PC-3 (cell line): ENCODE measurements at regions of chr13 and their contacts with region 1.

Region 1: DNA sequence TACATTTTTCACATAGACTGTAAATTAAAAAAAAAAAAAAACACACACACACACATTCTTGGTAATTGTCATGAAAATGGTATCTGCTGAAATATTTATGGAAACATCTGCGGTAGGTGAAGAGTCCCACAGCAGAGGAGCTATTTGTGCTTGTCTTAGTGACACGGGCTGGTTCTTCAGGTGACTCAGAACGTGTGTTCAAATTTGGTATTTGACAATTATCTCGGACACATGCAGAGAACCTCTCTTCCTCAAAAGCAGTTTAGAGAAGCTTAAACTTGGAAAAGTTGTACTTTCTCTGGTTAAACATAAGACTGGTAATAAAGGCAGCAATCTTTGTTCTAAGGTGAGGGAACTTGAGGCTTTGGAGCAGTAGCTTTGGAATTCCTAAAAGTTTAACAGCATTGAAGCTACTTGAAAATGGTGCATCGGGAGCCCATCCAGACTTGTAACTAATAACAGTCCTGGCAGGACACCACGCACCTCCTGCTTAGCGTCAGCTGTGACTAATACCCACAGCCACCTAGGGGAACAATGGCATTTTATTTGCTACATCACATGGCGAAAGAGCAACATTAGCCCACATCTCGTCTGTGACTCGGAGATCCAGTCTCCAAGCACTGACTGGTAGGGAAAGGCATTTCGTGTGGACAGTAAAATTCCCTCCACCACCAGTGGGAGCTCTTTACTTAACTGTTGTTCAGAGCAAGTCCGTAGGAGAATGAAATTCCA is 1505.1 kb upstream of the SLC10A2 start:
- DNase-seq: peak; percentile 90
- ATAC-seq: peak; percentile 96
- H3K4me3 ChIP-seq: peak overlapping the region; percentile 55
- H3K27ac ChIP-seq: peak overlapping the region; percentile 68
- H3K4me1 ChIP-seq: peaks cover 17% of the 10 kb centered on the region
- H3K27me3 ChIP-seq: no peaks in the 10 kb centered on the region
- CTCF ChIP-seq: peak; percentile 66

Region 2: DNA sequence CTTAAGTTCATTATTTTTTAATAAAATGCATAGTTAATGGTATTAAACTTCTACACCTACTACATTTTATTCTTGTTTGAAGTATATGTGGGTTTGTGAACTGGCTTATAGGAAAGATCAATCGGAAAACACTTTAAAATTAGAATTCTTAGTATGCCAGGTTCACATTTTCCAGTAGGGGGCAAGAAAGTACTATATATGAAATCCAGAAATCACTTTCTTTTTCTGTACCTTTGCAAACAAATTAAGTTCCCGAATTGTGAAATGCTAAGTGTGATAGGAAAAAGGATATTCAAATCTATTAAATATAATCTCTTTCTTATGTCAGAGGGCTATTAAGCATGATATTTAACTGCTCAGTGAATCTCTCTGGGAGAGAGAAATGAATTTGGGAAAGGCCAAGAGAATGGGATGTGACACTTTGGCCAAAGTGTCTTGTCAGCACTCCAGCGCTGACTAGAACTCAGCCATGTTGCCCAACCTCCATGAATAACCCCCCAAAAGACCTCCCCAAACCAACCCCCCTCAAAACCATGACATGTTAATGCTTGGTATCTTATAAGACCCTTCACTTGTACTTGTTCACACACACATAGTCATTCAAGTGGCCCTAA is 1382.5 kb before region 1 on chr13:
- CTCF ChIA-PET with region 1: no interaction called
- POLR2A ChIA-PET with region 1: no interaction called
- intact Hi-C with region 1: loop called (anchors 5 kb)
- DNase-seq: peak; percentile 48
- ATAC-seq: peak; percentile 24; the same call in 1 of the 2 replicates
- H3K4me3 ChIP-seq: no peak overlapping the region
- H3K27ac ChIP-seq: 0 out of 2 replicates have a peak overlapping the region, but pooled peaks have one; percentile 11
- H3K4me1 ChIP-seq: no peaks in the 10 kb centered on the region
- H3K27me3 ChIP-seq: no peaks in the 10 kb centered on the region
- CTCF ChIP-seq: peak; percentile 72

Region 3: GRCh38 chr13:103218253-103218652 is 1353.1 kb before region 1 on chr13:
- CTCF ChIA-PET with region 1: no interaction called
- POLR2A ChIA-PET with region 1: no interaction called
- intact Hi-C with region 1: no loop called
- DNase-seq: peak; percentile 16
- ATAC-seq: peak; percentile 73
- H3K4me3 ChIP-seq: no peak overlapping the region
- H3K27ac ChIP-seq: no peak overlapping the region
- H3K4me1 ChIP-seq: peaks cover 4% of the 10 kb centered on the region; the same call in 1 of the 2 replicates
- H3K27me3 ChIP-seq: no peaks in the 10 kb centered on the region
- CTCF ChIP-seq: no peak

Region 4: GRCh38 chr13:104289400-104289799 is 281.9 kb before region 1 on chr13:
- CTCF ChIA-PET with region 1: no interaction called
- POLR2A ChIA-PET with region 1: no interaction called
- intact Hi-C with region 1: loop called (anchors 1 kb)
- DNase-seq: peak; percentile 50
- ATAC-seq: peak; percentile 81
- H3K4me3 ChIP-seq: no peak overlapping the region
- H3K27ac ChIP-seq: no peak overlapping the region
- H3K4me1 ChIP-seq: peaks cover 14% of the 10 kb centered on the region
- H3K27me3 ChIP-seq: no peaks in the 10 kb centered on the region
- CTCF ChIP-seq: no peak

Region 5: GRCh38 chr13:104465996-104466395 is 105.3 kb before region 1 on chr13:
- CTCF ChIA-PET with region 1: no interaction called
- POLR2A ChIA-PET with region 1: no interaction called
- intact Hi-C with region 1: loop called (anchors 5 kb)
- DNase-seq: peak; percentile 66
- ATAC-seq: peak; percentile 100
- H3K4me3 ChIP-seq: no peak overlapping the region
- H3K27ac ChIP-seq: no peak overlapping the region; the same call in 1 of the 2 replicates
- H3K4me1 ChIP-seq: peaks cover 3% of the 10 kb centered on the region; the same call in 1 of the 2 replicates
- H3K27me3 ChIP-seq: no peaks in the 10 kb centered on the region
- CTCF ChIP-seq: no peak

Region 6: GRCh38 chr13:106471957-106472543 is 1900.7 kb after region 1 on chr13:
- CTCF ChIA-PET with region 1: no interaction called
- POLR2A ChIA-PET with region 1: no interaction called
- intact Hi-C with region 1: loop called (anchors 5 kb)
- DNase-seq: peak; percentile 92
- ATAC-seq: peak; percentile 94
- H3K4me3 ChIP-seq: peak overlapping the region; percentile 44; the same call in 1 of the 2 replicates
- H3K27ac ChIP-seq: peak overlapping the region; percentile 86
- H3K4me1 ChIP-seq: peaks cover 44% of the 10 kb centered on the region
- H3K27me3 ChIP-seq: no peaks in the 10 kb centered on the region
- CTCF ChIP-seq: no peak